ENCODE measurements at regions of chr2 and their contacts with region 1.

Region 1: GRCh38 chr2:69386789-69387734 is at the start of gene GFPT1:
- DNase-seq: peak; percentile 95 to 98 (median 98)
- ATAC-seq: peak; percentile 91 to 97 (median 96)
- H3K4me3 ChIP-seq: peak within 1 kb of the TSS; percentile 75 to 92 (median 88)
- H3K27ac ChIP-seq: peak within 1 kb of the TSS; percentile 72 to 97 (median 86)
- H3K4me1 ChIP-seq: peaks cover 3 to 24% (median 11%) of the 10 kb centered on the region in 3 donors
- H3K27me3 ChIP-seq: no peaks in the 10 kb centered on the region
- CTCF ChIP-seq: no peak
- total RNA-seq, gene GFPT1: 35.2 to 78.0 (median 47.7) TPM

Region 2: DNA sequence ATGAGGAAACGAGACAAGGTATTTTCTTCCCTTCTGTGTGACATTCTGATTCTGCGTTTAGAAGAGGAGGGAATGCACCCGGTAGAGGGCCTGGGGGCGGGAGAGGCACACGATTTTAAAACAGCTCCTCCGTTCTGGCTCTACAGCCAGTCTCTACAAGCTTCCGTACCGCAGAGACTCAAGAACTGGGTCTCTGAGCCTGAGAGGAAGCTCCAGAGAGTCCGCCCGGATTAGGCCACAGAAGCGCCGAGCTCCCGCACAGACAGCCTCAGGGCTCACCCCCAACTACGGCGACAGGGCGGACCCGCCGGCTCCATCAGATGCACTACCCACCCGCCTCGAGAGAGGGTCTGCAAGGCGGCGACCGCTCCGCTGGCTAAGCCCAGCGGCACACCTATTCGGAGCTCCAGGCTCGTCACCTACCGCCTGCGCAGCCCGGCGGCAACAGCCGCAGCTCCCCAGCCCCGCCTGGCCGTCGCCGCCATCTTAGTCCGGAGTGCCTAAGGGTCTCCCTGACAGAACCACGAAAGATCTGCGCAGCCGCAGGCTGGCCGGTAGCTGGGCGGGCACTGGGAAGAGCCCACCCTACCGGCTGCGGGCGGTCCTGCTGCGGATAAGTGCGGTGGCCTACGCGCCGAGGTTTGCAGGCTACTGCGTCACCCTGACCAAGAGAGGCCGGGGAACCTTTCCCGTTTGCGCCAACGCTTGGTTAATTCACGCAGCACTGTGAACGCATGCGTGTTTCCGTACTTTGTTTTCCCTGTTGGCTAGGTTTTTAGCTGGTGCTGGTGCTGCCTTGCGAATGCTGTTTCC is 50.1 kb after region 1 on chr2 and contains the start of gene NFU1:
- intact Hi-C with region 1: loop called in 1 of 3 experiments (anchors 10 kb)
- DNase-seq: peak; percentile 88 to 95 (median 90)
- ATAC-seq: peak; percentile 91 to 97 (median 94)
- H3K4me3 ChIP-seq: peak within 1 kb of the TSS; percentile 78 to 86 (median 82)
- H3K27ac ChIP-seq: peak within 1 kb of the TSS; percentile 87 to 99 (median 96)
- H3K4me1 ChIP-seq: peaks cover 0 to 14% (median 3%) of the 10 kb centered on the region in 3 donors
- H3K27me3 ChIP-seq: no peaks in the 10 kb centered on the region
- CTCF ChIP-seq: peak; percentile 39 to 63 (median 47)
- total RNA-seq, gene NFU1: 16.0 to 20.4 (median 18.4) TPM

Measured in pancreas (tissue), 10 donors.